ENCODE measurements at regions of chr6 and their contacts with region 1.

Region 1: GRCh38 chr6:50829898-50830439 is 11.3 kb downstream of the TFAP2B start:
- DNase-seq: no peak
- H3K4me3 Mint-ChIP-seq: no peak overlapping the region
- H3K27ac Mint-ChIP-seq: no peak overlapping the region
- H3K4me1 Mint-ChIP-seq: no peaks in the 10 kb centered on the region
- H3K27me3 Mint-ChIP-seq: peaks cover 86% of the 10 kb centered on the region
- CTCF ChIP-seq: no peak

Region 2: DNA sequence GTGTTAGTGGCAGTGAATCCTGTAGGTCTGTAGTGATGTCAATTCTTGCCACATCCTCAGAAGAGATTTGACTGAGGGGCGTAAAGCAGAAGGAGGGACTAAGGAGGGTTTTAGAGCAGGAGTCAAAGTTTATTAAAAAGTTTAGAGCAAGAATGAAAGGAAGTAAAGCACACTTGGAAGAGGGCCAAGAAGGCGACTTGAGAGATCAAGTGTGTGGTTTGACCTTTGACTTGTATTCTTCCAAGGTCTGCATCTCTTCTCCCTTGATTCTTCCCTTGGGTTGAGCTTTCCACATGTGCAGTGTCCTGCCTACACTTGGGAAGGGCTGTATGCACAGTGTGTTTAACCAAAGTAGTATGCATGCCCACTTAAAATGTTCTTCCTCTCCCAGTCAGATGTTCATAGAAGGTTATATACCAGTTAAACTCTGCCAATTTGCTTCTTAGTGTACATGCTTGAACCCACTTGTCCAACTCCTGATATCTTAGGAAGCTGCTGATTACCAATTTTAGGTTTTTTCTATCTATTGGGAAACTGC is 1994.5 kb before region 1 on chr6:
- CTCF ChIA-PET with region 1: no interaction called
- intact Hi-C with region 1: loop called (anchors 5 kb)
- DNase-seq: no peak
- H3K4me3 Mint-ChIP-seq: no peak overlapping the region
- H3K27ac Mint-ChIP-seq: no peak overlapping the region
- H3K4me1 Mint-ChIP-seq: peaks cover 16% of the 10 kb centered on the region
- H3K27me3 Mint-ChIP-seq: no peaks in the 10 kb centered on the region
- CTCF ChIP-seq: no peak

Measured in Calu3 (cell line).